HepG2 (cell line): ENCODE measurements at regions of chr3 and their contacts with region 1.

Region 1: GRCh38 chr3:88301273-88301995 is 151.7 kb downstream of the C3orf38 start:
- DNase-seq: no peak
- ATAC-seq: no peak
- H3K4me3 ChIP-seq: no peak overlapping the region
- H3K27ac ChIP-seq: no peak overlapping the region
- H3K4me1 ChIP-seq: no peaks in the 10 kb centered on the region
- H3K27me3 ChIP-seq: no peaks in the 10 kb centered on the region; a peak in 1 of 5 replicates
- CTCF ChIP-seq: no peak
- EP300 ChIP-seq: no peak
- POLR2A ChIP-seq: no peak
- RAD21 ChIP-seq: no peak

Region 2: GRCh38 chr3:87088993-87089841 is 1212.2 kb before region 1 on chr3:
- CTCF ChIA-PET with region 1: no interaction called
- POLR2A ChIA-PET with region 1: no interaction called
- in situ Hi-C with region 1: no loop called
- intact Hi-C with region 1: no loop called
- DNase-seq: no peak
- ATAC-seq: no peak
- H3K4me3 ChIP-seq: no peak overlapping the region
- H3K27ac ChIP-seq: no peak overlapping the region
- H3K4me1 ChIP-seq: no peaks in the 10 kb centered on the region
- H3K27me3 ChIP-seq: no peaks in the 10 kb centered on the region
- CTCF ChIP-seq: no peak
- EP300 ChIP-seq: no peak
- POLR2A ChIP-seq: no peak
- RAD21 ChIP-seq: no peak

Region 3: GRCh38 chr3:88267441-88267840 is 34.0 kb before region 1 on chr3:
- CTCF ChIA-PET with region 1: no interaction called
- POLR2A ChIA-PET with region 1: no interaction called
- in situ Hi-C with region 1: no loop called
- intact Hi-C with region 1: no loop called
- DNase-seq: no peak
- ATAC-seq: no peak
- H3K4me3 ChIP-seq: no peak overlapping the region
- H3K27ac ChIP-seq: no peak overlapping the region
- H3K4me1 ChIP-seq: no peaks in the 10 kb centered on the region
- H3K27me3 ChIP-seq: no peaks in the 10 kb centered on the region
- CTCF ChIP-seq: no peak
- EP300 ChIP-seq: no peak
- POLR2A ChIP-seq: no peak
- RAD21 ChIP-seq: no peak

Region 4: DNA sequence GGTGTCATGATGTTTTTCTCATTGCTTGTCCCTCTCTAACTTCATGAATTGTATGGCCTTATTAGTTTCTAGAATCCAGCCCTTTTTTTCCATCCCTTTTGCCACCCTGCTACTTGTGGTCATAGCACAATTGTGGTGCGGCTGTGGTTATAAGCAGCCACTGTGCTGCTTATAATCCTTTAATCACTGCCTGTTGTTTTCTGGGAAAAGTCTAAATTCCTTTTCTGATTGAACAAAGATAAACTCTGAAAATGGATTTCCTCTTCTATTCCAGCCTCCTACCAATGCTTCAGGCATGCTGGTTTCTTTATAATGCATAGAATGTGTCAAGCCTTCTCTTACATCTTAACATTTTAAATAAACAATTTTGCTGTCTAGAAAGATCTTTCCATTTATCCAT is 167.8 kb after region 1 on chr3:
- CTCF ChIA-PET with region 1: no interaction called
- POLR2A ChIA-PET with region 1: no interaction called
- in situ Hi-C with region 1: no loop called
- intact Hi-C with region 1: no loop called
- DNase-seq: no peak
- ATAC-seq: no peak
- H3K4me3 ChIP-seq: no peak overlapping the region
- H3K27ac ChIP-seq: no peak overlapping the region
- H3K4me1 ChIP-seq: no peaks in the 10 kb centered on the region
- H3K27me3 ChIP-seq: no peaks in the 10 kb centered on the region
- CTCF ChIP-seq: no peak
- EP300 ChIP-seq: no peak
- POLR2A ChIP-seq: no peak
- RAD21 ChIP-seq: no peak

Region 5: DNA sequence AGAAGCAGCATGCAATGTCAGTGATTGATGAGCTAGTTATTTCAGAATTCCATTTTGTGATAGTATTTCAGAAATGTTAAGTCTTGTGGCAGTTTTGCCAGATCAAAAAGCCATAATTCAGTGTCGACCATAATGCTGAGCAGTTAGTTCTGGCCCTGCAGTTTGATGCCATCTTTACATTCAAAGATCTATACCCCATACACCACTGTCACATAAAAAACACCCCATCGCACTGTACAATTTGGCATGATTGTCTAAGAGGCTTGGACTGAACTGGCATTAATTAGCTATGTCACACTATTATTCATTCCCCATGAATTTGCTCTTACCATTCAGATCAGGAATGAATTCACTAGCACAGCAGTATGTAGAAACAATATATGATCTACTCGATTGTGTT is 678.3 kb after region 1 on chr3:
- CTCF ChIA-PET with region 1: no interaction called
- POLR2A ChIA-PET with region 1: no interaction called
- in situ Hi-C with region 1: no loop called
- intact Hi-C with region 1: loop called (anchors 5 kb)
- DNase-seq: no peak
- ATAC-seq: no peak
- H3K4me3 ChIP-seq: no peak overlapping the region
- H3K27ac ChIP-seq: no peak overlapping the region
- H3K4me1 ChIP-seq: no peaks in the 10 kb centered on the region
- H3K27me3 ChIP-seq: no peaks in the 10 kb centered on the region
- CTCF ChIP-seq: no peak
- EP300 ChIP-seq: no peak
- POLR2A ChIP-seq: no peak
- RAD21 ChIP-seq: no peak